Mammary epithelial cell (primary cell): ENCODE measurements at regions of chr13 and their contacts with region 1.

Region 1: GRCh38 chr13:63124863-63125262 is 1709.2 kb upstream of the PCDH20 start:
- DNase-seq: no peak
- H3K4me3 ChIP-seq: no peak overlapping the region
- H3K27ac ChIP-seq: no peak overlapping the region
- H3K4me1 ChIP-seq: no peaks in the 10 kb centered on the region
- H3K27me3 ChIP-seq: no peaks in the 10 kb centered on the region
- CTCF ChIP-seq: peak; percentile 19 to 35

Region 2: GRCh38 chr13:63542770-63543169 is 417.9 kb after region 1 on chr13:
- CTCF ChIA-PET with region 1: no interaction called
- dilution Hi-C with region 1: no loop called
- in situ Hi-C with region 1: loop called in 1 of 2 experiments (anchors 25 kb)
- intact Hi-C with region 1: no loop called
- DNase-seq: no peak
- H3K4me3 ChIP-seq: no peak overlapping the region
- H3K27ac ChIP-seq: no peak overlapping the region
- H3K4me1 ChIP-seq: no peaks in the 10 kb centered on the region
- H3K27me3 ChIP-seq: no peaks in the 10 kb centered on the region
- CTCF ChIP-seq: no peak